ENCODE measurements at regions of chr4 and their contacts with region 1.

Region 1: GRCh38 chr4:87465739-87466366 is 43.5 kb downstream of the NUDT9 start:
- DNase-seq: no peak
- ATAC-seq: no peak

Region 2: DNA sequence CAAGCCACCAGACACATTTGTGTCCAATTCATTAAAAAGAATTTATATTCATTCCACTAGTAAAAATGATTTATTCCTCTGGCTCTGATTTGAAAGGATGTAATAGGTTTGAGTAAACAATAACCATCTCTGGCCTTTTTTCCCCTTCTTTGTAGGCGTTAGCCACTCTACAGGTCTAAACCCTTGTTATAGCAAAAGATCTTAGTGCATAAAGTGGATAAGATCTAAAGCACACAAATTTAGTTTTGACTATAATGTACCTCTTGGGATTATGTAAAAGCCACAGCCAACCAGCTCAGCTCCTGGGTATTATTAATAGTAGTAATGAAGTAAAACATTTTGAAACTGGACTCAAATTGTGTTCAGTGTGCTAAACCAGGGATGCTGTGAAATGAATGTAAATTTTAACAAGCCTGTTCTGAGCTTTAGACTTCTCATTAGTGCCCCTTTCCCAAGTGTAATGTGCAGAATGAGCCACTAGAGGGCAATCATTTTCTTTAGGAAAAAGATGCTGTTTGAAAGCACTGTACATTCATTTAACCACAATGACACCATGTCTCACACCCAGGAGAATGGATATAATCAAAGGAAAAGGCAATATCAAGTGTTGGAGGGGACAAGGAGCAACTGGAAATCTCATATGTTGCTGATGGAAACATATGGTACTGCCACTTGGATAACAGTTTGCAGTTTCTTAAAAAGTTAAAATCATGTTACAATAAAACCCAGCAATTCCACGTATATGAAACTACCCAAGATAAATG is 315.2 kb before region 1 on chr4:
- intact Hi-C with region 1: loop called in 1 of 2 experiments (anchors 10 kb)
- DNase-seq: no peak
- ATAC-seq: peak; percentile 44 to 75

Region 3: GRCh38 chr4:87270144-87270543 is 195.7 kb before region 1 on chr4:
- intact Hi-C with region 1: loop called in 1 of 2 experiments (anchors 5 kb)
- DNase-seq: no peak
- ATAC-seq: peak in 1 of 2 donors; percentile 47

Region 4: GRCh38 chr4:87375719-87376291 is 90.0 kb before region 1 on chr4:
- intact Hi-C with region 1: loop called (anchors 5 to 10 kb)
- DNase-seq: peak; percentile 34
- ATAC-seq: peak; percentile 77 to 86

Region 5: DNA sequence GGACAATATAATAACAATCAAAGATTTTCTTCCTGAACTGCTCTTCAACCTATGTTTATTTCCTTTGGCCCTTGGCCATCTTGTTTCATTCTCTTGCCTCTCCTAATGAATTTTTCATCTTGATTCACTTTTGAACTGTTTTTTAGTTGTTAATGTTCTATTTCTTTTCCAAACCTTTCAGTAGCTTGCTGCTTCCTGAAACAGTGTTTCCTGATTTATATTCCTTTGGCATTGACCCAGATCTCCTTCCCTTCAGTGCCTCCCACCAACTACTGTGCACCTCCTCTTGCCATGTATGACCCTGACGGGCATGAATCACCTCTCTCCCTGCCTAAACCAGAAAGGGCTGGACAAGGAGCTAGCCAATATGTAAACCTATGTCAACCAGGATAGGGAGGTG is 484.1 kb after region 1 on chr4:
- intact Hi-C with region 1: no loop called
- DNase-seq: no peak
- ATAC-seq: peak; percentile 61 to 92